ENCODE measurements at regions of chr19 and their contacts with region 1.

Region 1: DNA sequence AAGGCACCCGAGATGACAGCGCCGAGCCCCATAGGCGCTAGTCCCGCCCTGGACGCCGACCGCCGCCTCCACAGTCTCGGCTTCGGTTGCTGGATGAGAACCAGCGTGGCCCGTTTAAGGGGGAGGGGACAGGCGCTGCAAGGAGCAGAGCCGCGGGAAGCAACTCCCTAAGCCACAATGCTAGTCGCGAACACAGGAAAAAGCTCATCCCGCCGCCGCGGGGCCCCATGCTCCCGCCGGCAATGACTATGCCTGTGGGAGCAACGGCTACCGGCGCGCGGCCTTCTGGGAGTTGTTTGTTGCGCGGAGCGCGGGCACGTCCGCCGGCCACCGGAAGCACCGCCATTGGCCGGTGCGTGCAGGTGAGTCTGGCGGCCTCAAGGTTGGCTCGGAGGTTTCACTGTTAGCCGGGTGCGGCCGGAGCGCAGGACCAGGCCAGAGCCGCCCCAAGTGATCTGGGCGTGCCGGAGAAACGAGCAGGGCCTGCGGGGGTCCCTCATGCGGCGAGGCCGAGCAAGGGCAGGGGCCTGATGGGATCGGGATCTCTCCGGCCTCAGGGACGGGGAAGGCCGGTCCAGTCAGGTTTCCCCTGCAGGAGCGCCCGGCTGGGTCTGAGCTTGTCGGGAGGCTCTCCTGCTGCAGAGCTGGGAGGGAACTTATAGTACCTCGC is at the start of gene ZNF544:
- DNase-seq: peak; percentile 79
- total RNA-seq, gene ZNF544: 51.5 and 64.3 TPM in 2 replicates

Region 2: DNA sequence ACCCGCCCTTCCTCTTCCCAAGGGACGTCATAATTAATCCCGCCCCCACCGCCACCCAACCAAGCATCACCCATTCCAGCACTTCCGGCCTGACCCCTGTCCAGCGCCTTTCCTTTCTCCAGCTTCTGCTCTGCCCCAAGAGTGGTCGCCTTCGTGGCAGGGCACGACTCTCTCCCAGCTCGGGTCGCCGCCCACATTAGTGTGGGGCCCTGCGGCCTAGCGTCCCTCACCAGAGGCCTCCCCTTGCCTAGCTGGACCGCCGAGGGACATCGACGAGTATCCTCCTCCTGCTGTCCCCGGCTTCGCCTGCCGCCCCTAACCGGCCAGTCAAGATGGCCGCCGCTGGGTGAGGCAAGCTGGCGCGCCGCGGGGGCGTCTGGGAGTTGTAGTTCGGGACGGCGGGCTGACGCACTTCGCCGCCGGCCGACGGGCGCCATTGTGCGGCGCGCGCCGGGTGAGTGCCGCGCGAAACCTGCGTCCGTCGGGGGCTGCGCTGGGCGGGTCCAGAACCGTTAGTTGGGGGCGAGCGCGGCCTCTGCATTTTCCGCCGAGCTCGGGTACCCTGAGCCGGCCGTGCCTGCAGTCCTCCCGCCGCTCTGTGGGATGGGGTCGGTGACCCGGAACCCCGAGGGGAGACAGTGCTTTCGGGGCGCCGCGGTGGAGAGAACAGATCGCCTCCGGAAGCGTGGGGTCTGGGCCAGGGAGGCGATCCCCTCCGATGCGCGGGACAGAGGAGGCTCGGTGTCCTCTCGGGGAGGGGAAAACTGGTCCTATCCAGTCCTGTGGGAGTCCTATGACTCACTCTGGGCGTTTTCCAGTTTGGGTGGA is 45.5 kb before region 1 on chr19 and contains the start of gene ZNF274:
- in situ Hi-C with region 1: loop called (anchors 5 kb)
- DNase-seq: peak; percentile 96
- total RNA-seq, gene ZNF274: 41.3 and 54.2 TPM in 2 replicates

Measured in G401 (cell line).